ENCODE measurements at regions of chr11 and their contacts with region 1.

Region 1: GRCh38 chr11:133947321-133947756 is 9.4 kb downstream of the IGSF9B start:
- DNase-seq: peak; percentile 83
- ATAC-seq: peak; percentile 48
- H3K4me3 Mint-ChIP-seq: peak overlapping the region; percentile 82
- H3K27ac Mint-ChIP-seq: peak overlapping the region; percentile 96
- H3K4me1 Mint-ChIP-seq: peaks cover 96% of the 10 kb centered on the region
- H3K27me3 Mint-ChIP-seq: no peaks in the 10 kb centered on the region

Region 2: GRCh38 chr11:133892126-133892525 is 55.2 kb before region 1 on chr11:
- CTCF ChIA-PET with region 1: no interaction called
- POLR2A ChIA-PET with region 1: no interaction called
- DNase-seq: peak; percentile 15
- ATAC-seq: no peak
- H3K4me3 Mint-ChIP-seq: no peak overlapping the region
- H3K27ac Mint-ChIP-seq: no peak overlapping the region
- H3K4me1 Mint-ChIP-seq: no peaks in the 10 kb centered on the region
- H3K27me3 Mint-ChIP-seq: peaks cover 31% of the 10 kb centered on the region

Region 3: DNA sequence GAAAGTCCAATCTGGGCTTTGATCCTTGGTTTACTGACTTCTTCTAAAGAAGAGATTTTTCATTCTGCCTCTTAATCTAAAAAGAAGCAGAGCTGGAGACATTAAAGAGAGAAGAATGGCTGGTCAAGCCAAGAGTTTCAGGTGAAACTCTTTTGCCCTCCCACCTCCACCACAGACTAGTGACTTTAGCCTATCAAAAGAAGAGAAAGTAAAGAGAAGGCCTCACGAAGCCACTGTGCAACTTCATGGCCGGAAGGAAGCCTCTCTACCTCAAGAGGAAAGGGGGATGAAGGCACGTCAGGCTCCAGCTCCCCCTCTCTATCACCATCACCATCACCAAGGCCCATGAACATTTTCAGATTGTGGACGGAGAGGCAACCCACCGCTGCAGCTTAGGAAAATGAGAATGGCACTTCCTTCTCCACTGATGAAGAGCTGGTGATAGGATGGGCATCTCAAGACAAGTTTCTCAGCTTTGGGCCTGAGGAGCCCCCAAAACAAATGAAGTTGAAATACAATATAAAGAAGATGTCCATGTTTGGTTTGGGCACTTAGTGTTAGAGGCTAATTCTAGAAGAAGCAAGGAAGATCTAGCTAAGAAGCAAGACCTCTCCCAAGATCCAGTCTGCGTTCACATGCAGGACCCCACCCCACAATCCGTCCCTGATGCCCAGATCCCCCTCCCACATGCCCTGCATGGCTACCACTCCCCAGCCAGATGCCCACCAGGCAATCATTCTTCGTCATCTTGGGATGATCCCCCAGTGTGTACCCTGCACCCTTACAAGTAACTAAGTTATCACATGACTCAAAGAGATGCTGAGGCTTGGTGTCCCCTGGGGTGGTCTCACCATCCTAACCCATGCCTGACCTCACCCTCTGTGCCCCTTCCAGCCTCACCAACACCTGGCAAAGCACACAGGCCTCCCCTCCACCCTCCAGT is 43.2 kb before region 1 on chr11:
- CTCF ChIA-PET with region 1: no interaction called
- POLR2A ChIA-PET with region 1: no interaction called
- DNase-seq: no peak
- ATAC-seq: no peak
- H3K4me3 Mint-ChIP-seq: no peak overlapping the region
- H3K27ac Mint-ChIP-seq: peak overlapping the region; percentile 37
- H3K4me1 Mint-ChIP-seq: peaks cover 4% of the 10 kb centered on the region
- H3K27me3 Mint-ChIP-seq: no peaks in the 10 kb centered on the region

Region 4: DNA sequence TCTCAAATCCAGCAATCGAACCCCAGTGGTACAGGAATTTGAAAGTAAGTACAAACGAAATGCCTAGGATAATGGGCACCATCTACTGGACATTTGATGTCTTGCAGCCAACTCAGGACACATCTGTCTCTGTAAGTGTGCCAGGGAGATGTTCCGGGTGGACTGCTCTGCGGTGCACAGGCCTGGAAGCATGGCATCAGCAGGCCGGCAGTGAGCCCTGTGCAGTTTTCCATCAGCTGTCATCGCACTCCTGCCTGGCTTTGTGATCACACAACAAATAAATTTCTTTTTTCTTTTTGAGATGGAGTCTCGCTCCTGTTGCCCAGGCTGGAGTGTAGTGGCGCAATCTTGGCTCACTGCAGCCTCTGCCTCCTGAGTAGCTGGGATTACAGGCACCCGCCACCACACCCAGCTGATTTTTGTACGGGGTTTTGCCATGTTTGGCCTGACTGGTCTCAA is 192.6 kb after region 1 on chr11:
- CTCF ChIA-PET with region 1: interaction called, 11 read pairs
- POLR2A ChIA-PET with region 1: no interaction called
- DNase-seq: peak; percentile 70
- ATAC-seq: peak; percentile 64
- H3K4me3 Mint-ChIP-seq: no peak overlapping the region
- H3K27ac Mint-ChIP-seq: no peak overlapping the region
- H3K4me1 Mint-ChIP-seq: peaks cover 18% of the 10 kb centered on the region
- H3K27me3 Mint-ChIP-seq: no peaks in the 10 kb centered on the region